Activated T-helper 1 cell treated with anti-CD3 and anti-CD28 coated beads, Interleukin-12 subunit alpha, Interleukin-12 subunit beta, Interleukin-2, Interleukin-4 antibody, amounts not matched to agents 30 ng/mL and 10 ng/mL and 1 ng/mL, durations not matched to agents 14 hours and 24 hours and 36 hours (primary cell): ENCODE measurements at regions of chr19 and their contacts with region 1.

Region 1: DNA sequence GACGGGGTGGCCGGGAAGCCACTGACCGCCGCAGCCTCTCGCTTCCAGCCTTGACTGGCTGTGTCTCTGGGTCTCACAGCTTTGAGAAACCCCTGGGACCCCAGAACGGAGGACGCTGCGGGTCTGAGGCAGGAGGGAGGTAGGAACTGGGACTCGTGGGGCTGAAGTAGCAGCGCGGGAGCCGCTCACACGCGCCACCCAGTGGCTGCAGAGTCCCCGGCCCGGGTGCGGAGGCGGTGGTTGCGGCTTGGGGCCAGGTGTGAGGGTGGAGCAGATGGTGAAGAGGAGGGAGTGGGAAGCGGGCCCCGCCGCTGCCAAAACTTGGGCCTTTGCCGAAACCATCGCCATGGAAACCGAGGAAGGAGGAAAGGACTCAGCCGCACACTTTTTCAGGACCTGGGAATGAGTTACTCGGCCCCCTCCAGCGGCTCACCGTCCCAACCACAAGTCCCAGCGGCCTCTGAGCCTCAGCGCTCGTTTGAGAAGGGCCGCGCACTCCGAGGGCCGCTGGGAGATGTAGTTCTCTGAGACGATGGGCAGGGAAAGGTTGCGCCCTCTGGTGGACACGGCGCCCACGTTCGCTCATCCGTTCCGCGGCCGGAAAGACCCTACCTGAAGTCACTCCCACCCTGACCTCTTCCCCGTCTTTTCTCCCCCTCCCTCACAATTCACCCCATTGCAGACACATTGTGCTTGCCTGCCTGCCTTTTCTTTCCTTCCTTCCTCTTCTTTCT is 2.2 kb upstream of the SLC17A7 start:
- DNase-seq: peak; percentile 90
- H3K4me3 Mint-ChIP-seq: peak overlapping the region; percentile 82
- H3K27ac Mint-ChIP-seq: peak overlapping the region; percentile 88
- H3K4me1 Mint-ChIP-seq: peaks cover 42% of the 10 kb centered on the region
- H3K27me3 Mint-ChIP-seq: peaks cover 37% of the 10 kb centered on the region

Region 2: DNA sequence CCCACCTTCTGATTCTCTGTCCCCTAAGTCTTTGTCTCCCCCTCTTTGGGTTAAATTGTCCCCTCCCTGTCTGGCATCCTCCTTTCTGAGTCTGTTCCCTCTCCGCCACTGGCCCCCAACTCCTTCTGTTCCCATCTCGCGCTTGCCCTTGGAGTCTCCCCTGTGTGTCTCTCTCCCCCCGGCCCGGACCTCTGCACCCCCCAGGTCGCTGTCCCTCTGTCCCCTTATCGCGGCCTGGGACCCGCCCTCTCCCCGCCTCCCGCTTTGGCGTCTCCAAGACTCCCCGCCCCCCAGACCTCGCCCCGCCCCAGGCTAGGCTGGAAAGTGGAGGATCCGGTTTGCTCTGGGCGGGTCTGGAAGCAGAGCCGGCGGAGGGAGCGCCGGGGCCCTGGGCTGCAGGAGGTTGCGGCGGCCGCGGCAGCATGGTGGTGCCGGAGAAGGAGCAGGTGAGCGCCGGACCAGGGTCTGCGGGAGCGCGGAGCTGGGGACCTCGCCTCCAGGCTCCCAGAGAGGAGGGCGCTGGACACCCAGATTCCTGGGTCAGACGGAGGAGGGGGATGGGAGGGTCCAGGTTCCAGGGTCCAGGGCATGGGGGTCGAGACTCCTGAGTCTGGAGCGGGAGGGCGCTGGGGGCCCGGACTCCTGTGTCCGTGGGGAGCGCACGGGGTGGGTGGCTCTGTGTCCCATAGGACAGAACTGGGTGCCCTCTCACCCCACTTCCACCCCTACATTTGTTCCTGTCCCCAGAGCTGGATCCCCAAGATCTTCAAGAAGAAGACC is 285.9 kb before region 1 on chr19 and contains the start of gene TRPM4:
- intact Hi-C with region 1: no loop called
- DNase-seq: peak; percentile 53
- H3K4me3 Mint-ChIP-seq: peak within 1 kb of the TSS; percentile 76
- H3K27ac Mint-ChIP-seq: no peak within 1 kb of the TSS
- H3K4me1 Mint-ChIP-seq: peaks cover 7% of the 10 kb centered on the region
- H3K27me3 Mint-ChIP-seq: peaks cover 50% of the 10 kb centered on the region
- total RNA-seq, gene TRPM4: 1.4 and 2.0 TPM in 2 replicates

Region 3: GRCh38 chr19:49224856-49225255 is 218.7 kb before region 1 on chr19:
- intact Hi-C with region 1: loop called (anchors 1 kb)
- DNase-seq: peak; percentile 14
- H3K4me3 Mint-ChIP-seq: no peak overlapping the region
- H3K27ac Mint-ChIP-seq: no peak overlapping the region
- H3K4me1 Mint-ChIP-seq: peaks cover 7% of the 10 kb centered on the region
- H3K27me3 Mint-ChIP-seq: peaks cover 10% of the 10 kb centered on the region

Region 4: GRCh38 chr19:49363268-49364082 is 80.1 kb before region 1 on chr19 and contains the start of gene DKKL1:
- intact Hi-C with region 1: loop called (anchors 1 kb)
- DNase-seq: peak; percentile 72
- H3K4me3 Mint-ChIP-seq: no peak within 1 kb of the TSS
- H3K27ac Mint-ChIP-seq: no peak within 1 kb of the TSS
- H3K4me1 Mint-ChIP-seq: peaks cover 6% of the 10 kb centered on the region
- H3K27me3 Mint-ChIP-seq: peaks cover 32% of the 10 kb centered on the region
- total RNA-seq, gene DKKL1: not detected in 2 replicates

Region 5: GRCh38 chr19:49409441-49410029 is 34.0 kb before region 1 on chr19:
- intact Hi-C with region 1: loop called (anchors 5 kb)
- DNase-seq: peak; percentile 24
- H3K4me3 Mint-ChIP-seq: peak overlapping the region; percentile 6
- H3K27ac Mint-ChIP-seq: peak overlapping the region; percentile 81
- H3K4me1 Mint-ChIP-seq: peaks cover 44% of the 10 kb centered on the region
- H3K27me3 Mint-ChIP-seq: peaks cover 2% of the 10 kb centered on the region

Region 6: DNA sequence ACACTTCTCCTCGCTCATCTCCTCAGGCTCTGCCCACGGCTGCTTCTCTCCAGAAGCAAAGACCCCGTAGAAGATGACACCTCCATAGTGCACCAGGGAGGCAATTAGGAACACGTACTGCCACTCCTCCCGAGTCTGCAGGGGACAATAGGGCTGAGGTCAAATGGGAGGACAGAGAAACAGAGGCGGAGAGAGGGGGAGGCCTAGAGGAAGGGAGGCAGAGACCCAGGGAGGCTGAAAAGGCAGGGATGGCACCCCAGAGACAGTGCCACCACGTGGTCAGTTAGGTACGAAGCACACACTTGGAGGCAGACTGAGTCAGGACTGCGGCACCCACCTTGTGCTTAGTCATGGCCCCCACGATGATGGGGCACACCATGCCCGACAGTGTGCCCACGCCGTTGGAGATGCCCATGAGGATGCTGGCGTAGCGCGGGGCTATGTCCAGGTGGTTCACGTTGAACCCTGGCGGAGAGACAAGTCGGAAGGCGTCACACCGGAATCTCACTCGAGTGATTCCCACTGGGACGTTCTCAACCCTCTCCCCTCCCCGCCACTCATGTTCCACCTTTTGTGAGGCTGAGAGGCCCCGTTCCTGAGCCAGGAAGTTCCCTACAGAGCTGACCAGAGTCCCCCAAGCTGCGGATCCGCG is 12.7 kb before region 1 on chr19:
- intact Hi-C with region 1: loop called (anchors 1 kb)
- DNase-seq: no peak
- H3K4me3 Mint-ChIP-seq: no peak overlapping the region
- H3K27ac Mint-ChIP-seq: no peak overlapping the region
- H3K4me1 Mint-ChIP-seq: peaks cover 31% of the 10 kb centered on the region
- H3K27me3 Mint-ChIP-seq: peaks cover 85% of the 10 kb centered on the region

Region 7: GRCh38 chr19:49497047-49497788 is 53.7 kb after region 1 on chr19:
- intact Hi-C with region 1: loop called (anchors 2 kb)
- DNase-seq: peak; percentile 65
- H3K4me3 Mint-ChIP-seq: peak overlapping the region; percentile 91
- H3K27ac Mint-ChIP-seq: peak overlapping the region; percentile 94
- H3K4me1 Mint-ChIP-seq: peaks cover 64% of the 10 kb centered on the region
- H3K27me3 Mint-ChIP-seq: no peaks in the 10 kb centered on the region